ENCODE measurements at regions of chr22 and their contacts with region 1.

Region 1: DNA sequence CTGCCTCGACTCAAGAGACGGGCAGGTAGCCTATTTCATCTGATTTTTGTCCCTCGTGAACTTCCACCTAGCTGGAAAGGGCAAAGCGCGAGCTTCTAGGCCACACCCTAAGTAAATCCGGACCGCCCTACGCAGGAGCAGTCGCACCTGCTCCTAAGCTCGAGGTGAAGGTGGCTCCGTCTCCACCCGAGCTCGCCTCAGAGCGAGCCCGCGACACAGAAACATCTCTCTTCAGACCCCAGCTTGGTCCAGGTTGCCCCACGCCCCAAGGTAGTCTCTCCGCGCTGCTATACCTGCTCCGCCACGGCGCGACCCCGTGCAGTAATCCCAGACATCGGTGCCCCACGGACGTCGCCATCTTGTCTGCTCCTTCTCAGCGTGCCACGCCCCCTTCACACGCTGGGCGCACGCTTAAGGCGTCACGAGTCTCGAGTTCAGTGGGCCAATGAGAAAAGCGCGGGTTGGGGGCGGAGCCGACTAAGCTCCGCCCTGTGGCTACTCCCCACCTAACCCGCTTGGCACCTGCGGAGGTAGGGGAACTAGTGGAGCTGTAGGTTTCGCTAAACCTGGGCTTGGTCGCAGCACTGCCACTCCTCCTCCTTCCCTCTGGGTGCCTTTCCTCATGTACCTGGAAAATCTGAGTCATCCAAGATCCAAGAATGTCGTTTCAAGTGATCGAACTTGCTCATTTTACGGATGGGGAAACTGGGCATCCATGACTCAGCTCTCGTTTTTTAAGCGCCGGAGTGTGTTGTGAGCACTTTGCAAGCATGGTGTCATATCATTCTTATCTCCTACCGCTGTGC is at the start of gene PISD:
- DNase-seq: peak; percentile 98
- ATAC-seq: peak; percentile 89
- H3K4me3 Mint-ChIP-seq: peak within 1 kb of the TSS; percentile 84
- H3K27ac Mint-ChIP-seq: peak within 1 kb of the TSS; percentile 94
- H3K4me1 Mint-ChIP-seq: peaks cover 30% of the 10 kb centered on the region
- H3K27me3 Mint-ChIP-seq: peaks cover 2% of the 10 kb centered on the region
- total RNA-seq, gene PISD: 30.3 to 37.9 TPM

Region 2: GRCh38 chr22:30968924-30969539 is 693.0 kb before region 1 on chr22 and contains the start of gene TUG1:
- CTCF ChIA-PET with region 1: no interaction called
- POLR2A ChIA-PET with region 1: no interaction called
- intact Hi-C with region 1: loop called in 1 of 2 experiments (anchors 1 kb)
- DNase-seq: peak; percentile 99
- ATAC-seq: peak; percentile 93
- H3K4me3 Mint-ChIP-seq: peak within 1 kb of the TSS; percentile 90
- H3K27ac Mint-ChIP-seq: peak within 1 kb of the TSS; percentile 95
- H3K4me1 Mint-ChIP-seq: peaks cover 51% of the 10 kb centered on the region
- H3K27me3 Mint-ChIP-seq: no peaks in the 10 kb centered on the region
- total RNA-seq, gene TUG1: 46.8 to 56.4 TPM

Region 3: GRCh38 chr22:31630331-31631329 is 31.4 kb before region 1 on chr22:
- CTCF ChIA-PET with region 1: interaction called, 7 read pairs
- POLR2A ChIA-PET with region 1: interaction called, 14 read pairs
- intact Hi-C with region 1: loop called in 1 of 2 experiments (anchors 1 kb)
- DNase-seq: peak; percentile 93
- ATAC-seq: peak; percentile 82
- H3K4me3 Mint-ChIP-seq: peak overlapping the region; percentile 81
- H3K27ac Mint-ChIP-seq: peak overlapping the region; percentile 89
- H3K4me1 Mint-ChIP-seq: peaks cover 60% of the 10 kb centered on the region
- H3K27me3 Mint-ChIP-seq: no peaks in the 10 kb centered on the region

Region 4: GRCh38 chr22:31742682-31743081 is 80.6 kb after region 1 on chr22:
- CTCF ChIA-PET with region 1: no interaction called
- POLR2A ChIA-PET with region 1: no interaction called
- intact Hi-C with region 1: no loop called
- DNase-seq: no peak
- ATAC-seq: no peak
- H3K4me3 Mint-ChIP-seq: no peak overlapping the region
- H3K27ac Mint-ChIP-seq: peak overlapping the region; percentile 33
- H3K4me1 Mint-ChIP-seq: peaks cover 44% of the 10 kb centered on the region
- H3K27me3 Mint-ChIP-seq: no peaks in the 10 kb centered on the region

Region 5: GRCh38 chr22:31829505-31829904 is 167.5 kb after region 1 on chr22:
- CTCF ChIA-PET with region 1: no interaction called
- POLR2A ChIA-PET with region 1: interaction called, 4 read pairs
- intact Hi-C with region 1: loop called (anchors 2 to 10 kb)
- DNase-seq: peak; percentile 76
- ATAC-seq: peak; percentile 98
- H3K4me3 Mint-ChIP-seq: peak overlapping the region; percentile 4
- H3K27ac Mint-ChIP-seq: peak overlapping the region; percentile 88
- H3K4me1 Mint-ChIP-seq: peaks cover 31% of the 10 kb centered on the region
- H3K27me3 Mint-ChIP-seq: no peaks in the 10 kb centered on the region

Region 6: DNA sequence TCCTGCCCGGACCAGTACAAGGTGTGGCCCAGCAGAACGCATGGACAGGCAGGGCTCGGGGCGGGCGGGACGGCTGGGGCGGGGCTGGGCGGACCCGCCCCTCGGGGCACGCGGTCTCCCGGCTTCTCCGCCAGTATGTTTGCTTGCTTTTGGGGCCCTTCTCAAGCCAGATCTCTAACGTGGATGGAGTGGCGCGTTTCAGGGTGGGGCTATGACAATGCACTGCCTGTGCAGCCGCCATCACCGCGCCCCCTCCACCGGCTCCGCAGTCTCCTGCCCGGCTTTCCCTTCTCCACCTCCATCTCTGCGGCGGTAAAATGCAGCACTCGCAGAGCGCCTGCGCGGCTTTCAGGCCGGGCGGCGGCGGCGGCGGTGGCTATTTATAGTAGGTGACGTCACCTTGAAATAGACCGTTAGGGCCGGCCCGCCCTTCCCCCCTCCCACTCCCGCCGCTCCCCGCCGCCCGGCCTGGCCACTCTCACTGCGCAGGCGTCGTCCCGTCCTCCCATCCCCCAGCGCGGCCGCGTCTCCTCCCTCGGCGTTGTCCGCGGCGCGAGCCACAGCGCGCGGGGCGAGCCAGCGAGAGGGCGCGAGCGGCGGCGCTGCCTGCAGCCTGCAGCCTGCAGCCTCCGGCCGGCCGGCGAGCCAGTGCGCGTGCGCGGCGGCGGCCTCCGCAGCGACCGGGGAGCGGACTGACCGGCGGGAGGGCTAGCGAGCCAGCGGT is 282.1 kb after region 1 on chr22 and contains the start of gene YWHAH:
- CTCF ChIA-PET with region 1: interaction called, 37 read pairs
- POLR2A ChIA-PET with region 1: no interaction called
- intact Hi-C with region 1: loop called (anchors 1 to 2 kb)
- DNase-seq: peak; percentile 96
- ATAC-seq: peak; percentile 73
- H3K4me3 Mint-ChIP-seq: no peak within 1 kb of the TSS
- H3K27ac Mint-ChIP-seq: peak within 1 kb of the TSS; percentile 84
- H3K4me1 Mint-ChIP-seq: peaks cover 21% of the 10 kb centered on the region
- H3K27me3 Mint-ChIP-seq: no peaks in the 10 kb centered on the region
- total RNA-seq, gene YWHAH: 83.2 to 98.5 TPM

Region 7: DNA sequence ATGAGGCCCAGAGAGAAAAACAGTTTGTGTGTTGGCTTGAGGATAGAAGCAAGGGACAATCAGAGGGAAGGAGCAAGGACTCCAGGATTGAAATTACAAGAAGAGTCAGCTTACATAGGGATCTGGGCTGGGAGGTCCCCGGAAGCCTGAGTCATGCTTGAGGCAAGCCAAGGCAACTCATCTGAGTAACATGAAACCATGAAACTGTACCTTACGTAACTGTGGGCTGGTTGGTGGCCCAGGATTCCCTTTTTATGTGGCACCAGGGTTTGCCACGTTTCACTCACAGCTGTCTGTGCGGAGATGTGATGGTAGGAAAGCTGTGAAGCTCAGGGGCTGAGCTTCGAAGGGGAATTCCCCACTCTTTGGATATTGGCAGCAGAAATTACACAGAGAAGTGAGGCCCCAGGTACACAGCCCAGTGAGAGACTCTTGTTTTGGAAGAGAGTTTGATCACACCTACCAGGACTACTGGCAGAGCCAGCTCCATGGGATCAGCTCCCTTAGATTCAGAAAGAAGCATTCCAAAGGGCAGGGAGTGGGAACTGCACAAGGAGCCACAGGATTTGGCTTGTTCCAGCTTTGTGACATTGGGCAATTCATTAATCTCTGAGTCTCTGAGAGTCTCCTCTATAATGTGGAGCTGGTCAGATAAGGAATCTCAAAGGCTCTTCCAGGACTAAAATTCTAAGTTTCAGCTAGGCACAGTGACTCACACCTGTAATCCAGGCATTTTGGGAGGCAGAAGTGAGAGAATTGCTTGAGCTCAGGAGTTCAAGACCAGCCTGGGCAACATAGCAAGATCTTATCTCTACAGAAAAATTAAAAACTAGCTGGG is 388.8 kb after region 1 on chr22:
- CTCF ChIA-PET with region 1: no interaction called
- POLR2A ChIA-PET with region 1: no interaction called
- intact Hi-C with region 1: loop called in 1 of 2 experiments (anchors 2 kb)
- DNase-seq: peak; percentile 88
- ATAC-seq: peak; percentile 99
- H3K4me3 Mint-ChIP-seq: no peak overlapping the region
- H3K27ac Mint-ChIP-seq: no peak overlapping the region
- H3K4me1 Mint-ChIP-seq: peaks cover 18% of the 10 kb centered on the region
- H3K27me3 Mint-ChIP-seq: peaks cover 53% of the 10 kb centered on the region

Region 8: GRCh38 chr22:32411829-32412592 is 750.0 kb after region 1 on chr22 and contains the start of gene RTCB:
- CTCF ChIA-PET with region 1: no interaction called
- POLR2A ChIA-PET with region 1: no interaction called
- intact Hi-C with region 1: loop called in 1 of 2 experiments (anchors 5 kb)
- DNase-seq: peak; percentile 95
- ATAC-seq: peak; percentile 83
- H3K4me3 Mint-ChIP-seq: peak within 1 kb of the TSS; percentile 93
- H3K27ac Mint-ChIP-seq: peak within 1 kb of the TSS; percentile 95
- H3K4me1 Mint-ChIP-seq: peaks cover 41% of the 10 kb centered on the region
- H3K27me3 Mint-ChIP-seq: no peaks in the 10 kb centered on the region
- total RNA-seq, gene RTCB: 60.9 to 86.3 TPM

Measured in activated CD4-positive, alpha-beta T cell treated with anti-CD3 and anti-CD28 coated beads for 36 hours (primary cell).